Prostate gland (tissue), 2 donors: ENCODE measurements at regions of chr17 and their contacts with region 1.

Region 1: DNA sequence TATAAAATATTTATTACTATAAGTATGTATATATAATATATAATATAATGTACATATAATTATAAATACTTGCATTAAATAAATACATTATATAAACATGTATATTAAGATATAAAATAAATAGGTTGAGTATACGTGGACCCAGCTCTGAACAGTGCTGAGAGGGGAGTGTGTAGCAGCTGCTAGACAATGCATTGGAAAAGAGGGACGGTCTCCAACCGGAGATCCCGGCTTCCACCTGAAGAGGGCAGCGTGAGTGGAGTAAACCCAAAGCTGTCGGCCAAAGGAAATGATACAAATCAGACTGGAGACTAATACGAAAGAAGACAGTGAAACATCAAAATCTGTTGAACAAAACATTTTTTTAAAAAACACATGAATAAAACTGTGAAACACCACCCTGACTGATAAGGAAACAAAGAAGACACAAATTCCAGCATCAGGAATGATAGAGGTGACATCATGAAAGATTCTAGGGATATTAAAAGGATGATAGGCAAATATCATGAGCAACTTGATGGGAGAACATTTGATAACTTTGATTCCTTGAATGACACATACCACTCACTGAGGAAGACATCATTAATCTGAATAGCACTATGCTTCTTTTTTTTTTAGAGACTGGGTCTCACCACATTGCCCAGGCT is 125.4 kb upstream of the CHMP6 start:
- DNase-seq: peak; percentile 44
- H3K4me3 ChIP-seq: no peak overlapping the region
- H3K27ac ChIP-seq: no peak overlapping the region
- H3K4me1 ChIP-seq: no peaks in the 10 kb centered on the region
- H3K27me3 ChIP-seq: no peaks in the 10 kb centered on the region
- CTCF ChIP-seq: peak; percentile 32 to 71 (median 56)
- POLR2A ChIP-seq: no peak

Region 2: GRCh38 chr17:80544655-80545498 is 321.4 kb before region 1 on chr17 and contains the start of gene RPTOR:
- intact Hi-C with region 1: loop called (anchors 10 kb)
- DNase-seq: peak; percentile 87
- H3K4me3 ChIP-seq: peak within 1 kb of the TSS; percentile 78
- H3K27ac ChIP-seq: peak within 1 kb of the TSS; percentile 65 to 66
- H3K4me1 ChIP-seq: peaks cover 6% of the 10 kb centered on the region
- H3K27me3 ChIP-seq: no peaks in the 10 kb centered on the region
- CTCF ChIP-seq: peak in 2 of 4 experiments; percentile 20 to 27
- POLR2A ChIP-seq: peak; percentile 13
- total RNA-seq, gene RPTOR: 30.3 to 62.5 TPM

Region 3: GRCh38 chr17:80970044-80970761 is 103.9 kb after region 1 on chr17:
- intact Hi-C with region 1: loop called (anchors 2 kb)
- DNase-seq: peak; percentile 32
- H3K4me3 ChIP-seq: no peak overlapping the region
- H3K27ac ChIP-seq: no peak overlapping the region
- H3K4me1 ChIP-seq: peaks cover 6% of the 10 kb centered on the region
- H3K27me3 ChIP-seq: peaks cover 10% of the 10 kb centered on the region
- CTCF ChIP-seq: peak; percentile 13 to 76 (median 66)
- POLR2A ChIP-seq: no peak